ENCODE measurements at regions of chr6 and their contacts with region 1.

Region 1: GRCh38 chr6:158131926-158132325 is 36.1 kb downstream of the SERAC1 start:
- DNase-seq: peak; percentile 65
- H3K4me3 Mint-ChIP-seq: no peak overlapping the region
- H3K27ac Mint-ChIP-seq: no peak overlapping the region
- H3K4me1 Mint-ChIP-seq: no peaks in the 10 kb centered on the region
- H3K27me3 Mint-ChIP-seq: no peaks in the 10 kb centered on the region
- CTCF ChIP-seq: peak; percentile 36

Region 2: DNA sequence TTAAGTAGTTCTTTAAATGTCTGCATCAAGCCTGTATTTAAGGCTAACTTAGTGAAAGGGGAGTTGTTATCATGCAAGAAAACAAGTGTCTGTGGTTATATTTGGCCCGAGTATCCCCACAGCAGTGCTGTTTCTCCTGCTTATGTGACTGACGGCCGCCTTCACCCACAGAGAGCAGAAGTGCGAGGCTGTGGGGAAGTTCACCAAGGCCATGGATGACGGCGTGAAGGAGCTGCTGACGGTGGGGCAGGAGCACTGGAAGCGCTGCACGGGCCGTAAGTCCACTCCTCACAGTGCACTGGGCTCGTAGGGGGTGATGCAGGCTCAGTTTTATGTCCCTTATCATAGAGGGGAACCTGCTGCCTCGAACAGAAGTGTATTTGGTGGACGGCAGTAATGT is 203.5 kb before region 1 on chr6:
- CTCF ChIA-PET with region 1: no interaction called
- POLR2A ChIA-PET with region 1: no interaction called
- intact Hi-C with region 1: no loop called
- DNase-seq: no peak
- H3K4me3 Mint-ChIP-seq: no peak overlapping the region
- H3K27ac Mint-ChIP-seq: no peak overlapping the region
- H3K4me1 Mint-ChIP-seq: no peaks in the 10 kb centered on the region
- H3K27me3 Mint-ChIP-seq: no peaks in the 10 kb centered on the region
- CTCF ChIP-seq: no peak

Region 3: DNA sequence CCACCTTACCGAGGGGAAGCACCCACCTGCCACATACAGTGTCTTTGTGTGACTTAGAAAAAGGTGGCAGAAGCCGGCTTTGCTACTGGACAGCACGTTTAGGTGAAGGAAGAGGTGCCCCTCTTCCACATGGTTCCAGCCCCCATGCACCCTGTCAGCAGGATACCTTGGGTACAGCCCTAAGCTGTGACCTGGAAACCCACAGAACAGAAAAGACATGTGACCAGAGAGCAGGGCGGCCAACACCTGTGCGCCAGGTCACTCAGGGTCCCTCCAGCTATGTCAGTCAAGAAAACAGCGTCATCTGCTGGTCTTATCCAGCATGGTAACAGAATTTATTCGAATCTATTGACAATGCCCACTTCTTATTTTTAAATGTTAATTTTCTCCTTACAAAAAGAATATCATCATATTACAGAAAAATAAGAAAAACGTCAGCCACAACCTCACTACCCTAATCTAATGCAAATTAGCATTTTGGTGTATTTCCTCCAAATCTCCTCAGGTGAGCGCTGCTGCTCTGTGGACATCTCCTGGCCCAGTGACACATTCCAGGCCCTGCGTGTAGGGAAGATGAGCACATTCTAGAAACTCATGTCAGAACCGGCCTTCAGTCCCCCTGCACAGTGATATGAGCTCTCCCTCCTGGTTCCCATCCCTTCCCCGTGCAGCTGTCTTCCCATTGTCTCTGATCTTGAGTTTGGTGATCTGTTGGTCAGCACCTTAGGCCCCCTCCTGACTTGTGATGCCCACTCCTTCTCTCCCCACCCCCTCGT is 73.4 kb after region 1 on chr6:
- CTCF ChIA-PET with region 1: no interaction called
- POLR2A ChIA-PET with region 1: no interaction called
- intact Hi-C with region 1: loop called (anchors 2 kb)
- DNase-seq: no peak
- H3K4me3 Mint-ChIP-seq: no peak overlapping the region
- H3K27ac Mint-ChIP-seq: peak overlapping the region; percentile 74
- H3K4me1 Mint-ChIP-seq: peaks cover 7% of the 10 kb centered on the region
- H3K27me3 Mint-ChIP-seq: no peaks in the 10 kb centered on the region
- CTCF ChIP-seq: peak; percentile 43

Measured in MCF 10A (cell line).